MCF 10A (cell line): ENCODE measurements at regions of chr4 and their contacts with region 1.

Region 1: DNA sequence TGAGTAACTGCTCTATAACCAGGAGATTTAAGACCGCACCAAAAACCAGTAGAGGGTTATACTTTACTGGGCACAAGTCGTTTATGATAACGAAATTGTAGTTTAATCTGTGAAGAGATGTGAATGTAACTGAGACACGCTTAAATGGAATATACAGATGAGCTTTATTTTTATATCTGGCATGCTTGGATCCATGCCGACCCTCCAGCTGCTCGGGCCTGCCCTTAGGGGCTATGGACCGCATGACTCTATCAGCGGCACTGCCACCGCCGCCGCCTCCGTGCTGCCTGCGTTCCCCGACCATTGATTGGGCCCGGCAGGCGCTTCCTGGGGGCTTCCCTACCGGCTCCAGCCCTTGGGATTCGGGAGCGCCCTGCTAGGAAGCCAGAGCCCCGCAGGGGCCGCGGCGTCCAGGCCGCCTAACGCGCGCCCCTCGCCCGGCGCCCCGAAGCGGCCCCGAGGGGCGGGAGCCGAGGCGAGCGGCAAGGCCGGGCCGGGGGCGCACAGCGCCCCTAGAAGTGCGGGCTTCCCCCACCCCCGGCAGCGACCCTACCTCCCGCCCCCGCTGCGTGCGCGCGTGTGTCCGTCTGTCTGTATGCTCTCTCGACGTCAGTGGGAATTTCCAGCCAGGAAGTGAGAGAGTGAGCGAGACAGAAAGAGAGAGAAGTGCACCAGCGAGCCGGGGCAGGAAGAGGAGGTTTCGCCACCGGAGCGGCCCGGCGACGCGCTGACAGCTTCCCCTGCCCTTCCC is at the start of gene NFKB1:
- DNase-seq: peak; percentile 85
- H3K4me3 Mint-ChIP-seq: peak within 1 kb of the TSS; percentile 95
- H3K27ac Mint-ChIP-seq: peak within 1 kb of the TSS; percentile 96
- H3K4me1 Mint-ChIP-seq: peaks cover 17% of the 10 kb centered on the region
- H3K27me3 Mint-ChIP-seq: no peaks in the 10 kb centered on the region
- CTCF ChIP-seq: no peak
- total RNA-seq, gene NFKB1: 40.1 and 70.9 TPM in 2 replicates

Region 2: DNA sequence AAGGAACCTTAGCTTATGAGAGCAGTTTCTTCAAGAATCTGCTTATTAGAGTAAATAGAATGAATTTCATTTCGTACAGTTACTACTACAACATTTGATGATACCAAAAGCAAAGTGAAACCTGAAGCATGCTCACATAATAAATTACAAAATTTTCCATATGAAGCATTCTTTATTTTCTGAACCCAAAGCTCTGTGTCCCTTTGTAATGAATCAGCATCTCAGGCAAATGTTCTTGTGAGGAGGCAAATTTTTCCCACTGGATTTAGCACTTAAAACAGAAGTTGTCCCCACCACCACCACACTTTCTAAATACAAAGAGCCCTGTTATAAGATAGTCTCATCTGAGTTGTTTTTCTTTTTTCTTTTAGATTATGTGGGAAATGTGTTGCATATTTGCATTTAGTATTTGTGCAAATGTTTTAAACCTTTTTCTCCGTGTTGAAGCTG is 70.4 kb before region 1 on chr4:
- CTCF ChIA-PET with region 1: interaction called, 3 read pairs
- POLR2A ChIA-PET with region 1: interaction called, 25 read pairs
- intact Hi-C with region 1: loop called (anchors 2 kb)
- DNase-seq: peak; percentile 35
- H3K4me3 Mint-ChIP-seq: peak overlapping the region; percentile 81
- H3K27ac Mint-ChIP-seq: peak overlapping the region; percentile 73
- H3K4me1 Mint-ChIP-seq: peaks cover 11% of the 10 kb centered on the region
- H3K27me3 Mint-ChIP-seq: no peaks in the 10 kb centered on the region
- CTCF ChIP-seq: no peak

Region 3: DNA sequence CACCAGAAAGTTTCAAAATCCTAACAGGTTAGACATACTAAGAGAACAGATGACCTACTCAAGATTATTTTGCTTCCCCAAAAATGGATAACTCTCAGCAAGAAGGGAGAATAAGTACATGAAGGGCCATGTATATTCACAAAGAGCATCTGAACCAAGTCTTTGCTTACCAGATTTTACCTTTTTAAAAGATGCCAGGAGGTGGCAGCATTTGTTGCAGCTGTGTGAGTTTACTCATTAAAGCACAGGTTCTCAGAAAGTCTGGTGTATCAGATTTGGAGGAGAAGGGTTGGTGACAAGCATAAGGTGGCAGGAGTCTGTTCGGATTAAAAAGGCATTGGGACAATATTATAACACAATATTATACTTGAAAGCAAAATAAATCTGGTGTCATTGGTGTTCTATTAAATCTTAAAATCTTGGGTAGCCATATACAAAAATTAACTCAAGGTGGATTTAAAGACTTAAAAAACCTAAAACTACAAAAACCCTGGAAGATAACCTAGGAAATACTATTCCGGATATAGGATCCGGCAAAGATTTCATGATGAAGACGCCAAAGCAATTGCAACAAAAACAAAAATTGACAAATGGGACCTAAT is 51.0 kb before region 1 on chr4:
- CTCF ChIA-PET with region 1: interaction called, 4 read pairs
- POLR2A ChIA-PET with region 1: interaction called, 8 read pairs
- intact Hi-C with region 1: loop called (anchors 5 kb)
- DNase-seq: peak; percentile 72
- H3K4me3 Mint-ChIP-seq: no peak overlapping the region
- H3K27ac Mint-ChIP-seq: no peak overlapping the region
- H3K4me1 Mint-ChIP-seq: no peaks in the 10 kb centered on the region
- H3K27me3 Mint-ChIP-seq: no peaks in the 10 kb centered on the region
- CTCF ChIP-seq: peak; percentile 63

Region 4: GRCh38 chr4:102543030-102543928 is 42.4 kb after region 1 on chr4:
- CTCF ChIA-PET with region 1: interaction called, 4 read pairs
- POLR2A ChIA-PET with region 1: interaction called, 43 read pairs
- intact Hi-C with region 1: no loop called
- DNase-seq: no peak
- H3K4me3 Mint-ChIP-seq: no peak overlapping the region
- H3K27ac Mint-ChIP-seq: peak overlapping the region; percentile 62
- H3K4me1 Mint-ChIP-seq: peaks cover 16% of the 10 kb centered on the region
- H3K27me3 Mint-ChIP-seq: no peaks in the 10 kb centered on the region
- CTCF ChIP-seq: no peak

Region 5: DNA sequence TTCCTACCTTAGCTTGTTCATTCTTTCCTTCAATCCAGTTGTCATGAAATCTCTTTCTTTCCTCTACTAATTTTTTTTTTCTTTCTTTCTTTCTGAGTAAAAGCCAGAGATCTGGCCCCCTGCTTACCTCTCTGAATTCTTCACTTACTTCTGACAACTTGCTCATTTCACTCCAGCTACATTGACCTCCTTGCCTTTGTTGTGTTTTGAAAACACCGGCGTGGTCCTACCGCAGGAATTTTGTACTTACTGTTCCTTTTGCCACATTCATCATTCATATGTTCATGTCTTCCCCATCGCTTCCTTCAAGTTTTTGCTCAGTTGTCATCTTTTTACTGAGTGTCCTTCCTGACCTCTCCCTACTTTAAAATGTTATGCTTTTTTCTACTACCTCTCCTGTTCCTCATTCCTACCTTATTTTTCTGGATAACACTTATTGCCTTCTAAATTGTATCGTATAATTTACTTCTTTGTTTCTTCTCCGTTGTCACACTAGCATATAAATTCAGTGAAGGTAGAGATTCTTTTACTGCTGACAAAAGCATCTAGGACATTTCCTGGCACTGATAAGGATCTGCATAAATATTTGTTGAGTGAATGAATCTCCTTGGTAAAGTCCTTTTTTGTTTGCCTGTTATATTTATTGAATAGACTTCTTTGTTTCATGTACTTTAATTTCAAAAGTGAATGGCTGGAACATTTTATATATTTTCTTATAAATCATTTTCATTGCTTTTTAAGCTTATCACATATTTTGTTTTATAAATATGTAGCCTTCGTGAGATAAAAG is 74.7 kb after region 1 on chr4:
- CTCF ChIA-PET with region 1: no interaction called
- POLR2A ChIA-PET with region 1: interaction called, 32 read pairs
- intact Hi-C with region 1: no loop called
- DNase-seq: no peak
- H3K4me3 Mint-ChIP-seq: peak overlapping the region; percentile 13
- H3K27ac Mint-ChIP-seq: peak overlapping the region; percentile 47
- H3K4me1 Mint-ChIP-seq: peaks cover 22% of the 10 kb centered on the region
- H3K27me3 Mint-ChIP-seq: no peaks in the 10 kb centered on the region
- CTCF ChIP-seq: no peak